A549 (cell line): ENCODE measurements at regions of chr3 and their contacts with region 1.

Region 1: GRCh38 chr3:142987080-142987700 is 14.2 kb upstream of the U2SURP start:
- DNase-seq: peak; percentile 50 to 54
- ATAC-seq: peak in 1 of 2 experiments; percentile 82; a peak in 3 of 6 replicates
- H3K4me3 ChIP-seq: no peak overlapping the region
- H3K27ac ChIP-seq: peak overlapping the region in 1 of 2 experiments; percentile 73; a peak in 3 of 6 replicates
- H3K4me1 ChIP-seq: no peaks in the 10 kb centered on the region
- CTCF ChIP-seq: peak; percentile 76
- EP300 ChIP-seq: no peak
- POLR2A ChIP-seq: no peak
- RAD21 ChIP-seq: peak; percentile 77 to 78

Region 2: GRCh38 chr3:142586803-142587406 is 400.3 kb before region 1 on chr3:
- CTCF ChIA-PET with region 1: interaction called, 16 read pairs
- POLR2A ChIA-PET with region 1: no interaction called
- DNase-seq: peak; percentile 84
- ATAC-seq: peak; percentile 95 to 96
- H3K4me3 ChIP-seq: no peak overlapping the region
- H3K27ac ChIP-seq: no peak overlapping the region
- H3K4me1 ChIP-seq: peaks cover 7% of the 10 kb centered on the region; the same call in 2 of the 3 replicates
- CTCF ChIP-seq: peak; percentile 94
- EP300 ChIP-seq: no peak
- POLR2A ChIP-seq: no peak
- RAD21 ChIP-seq: peak; percentile 95 to 97

Region 3: GRCh38 chr3:142896201-142896755 is 90.9 kb before region 1 on chr3:
- CTCF ChIA-PET with region 1: no interaction called
- POLR2A ChIA-PET with region 1: no interaction called
- DNase-seq: peak; percentile 40 to 53
- ATAC-seq: peak; percentile 74 to 80
- H3K4me3 ChIP-seq: no peak overlapping the region
- H3K27ac ChIP-seq: 0 out of 6 replicates have a peak overlapping the region, but pooled peaks of 1 of the 2 experiments have one; percentile 32
- H3K4me1 ChIP-seq: peaks cover 7% of the 10 kb centered on the region; the same call in 2 of the 3 replicates
- CTCF ChIP-seq: no peak
- EP300 ChIP-seq: no peak
- POLR2A ChIP-seq: no peak
- RAD21 ChIP-seq: no peak

Region 4: GRCh38 chr3:142929109-142929508 is 58.1 kb before region 1 on chr3:
- CTCF ChIA-PET with region 1: interaction called, 20 read pairs
- POLR2A ChIA-PET with region 1: no interaction called
- DNase-seq: peak; percentile 78 to 82
- ATAC-seq: peak; percentile 87 to 92
- H3K4me3 ChIP-seq: no peak overlapping the region
- H3K27ac ChIP-seq: no peak overlapping the region
- H3K4me1 ChIP-seq: no peaks in the 10 kb centered on the region; the same call in 2 of the 3 replicates
- CTCF ChIP-seq: peak; percentile 87
- EP300 ChIP-seq: no peak
- POLR2A ChIP-seq: no peak
- RAD21 ChIP-seq: peak; percentile 72 to 76

Region 5: DNA sequence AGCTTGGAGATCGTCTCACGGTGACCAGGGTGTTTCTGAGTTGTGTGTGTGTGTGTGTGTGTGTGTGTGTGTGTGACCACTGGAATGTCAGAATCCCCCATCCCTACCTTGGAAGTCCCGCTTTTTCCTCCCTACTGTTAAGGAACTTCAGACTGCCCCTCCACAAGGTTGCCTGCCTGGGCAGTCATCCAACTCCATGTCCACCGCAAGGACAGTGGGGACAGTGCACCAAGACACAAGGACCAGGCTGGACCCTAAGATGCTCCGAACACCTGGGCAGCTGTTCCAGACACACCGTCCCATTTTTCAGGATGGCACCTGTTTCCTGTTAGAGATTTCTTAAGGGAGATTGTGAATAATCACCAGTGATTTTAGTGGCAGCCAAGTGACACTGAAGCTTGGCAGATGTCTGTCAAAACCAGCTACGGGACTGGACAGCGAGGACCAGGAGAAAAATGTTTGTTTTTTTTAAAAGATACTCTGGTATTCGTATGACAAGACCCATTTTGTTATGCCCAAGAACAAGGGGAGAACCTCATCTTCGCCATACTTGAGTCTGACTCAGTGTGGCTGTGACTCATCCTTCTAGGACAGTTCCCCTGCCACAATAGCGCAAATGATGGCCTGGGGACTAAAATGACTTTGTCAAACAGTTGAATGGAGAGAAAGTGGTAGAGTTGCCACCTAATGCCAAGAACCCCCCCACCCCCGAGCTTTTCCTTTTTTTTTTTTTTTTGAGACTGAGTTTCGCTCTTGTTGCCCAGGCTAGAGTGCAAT is 39.2 kb before region 1 on chr3:
- CTCF ChIA-PET with region 1: interaction called, 10 read pairs
- POLR2A ChIA-PET with region 1: no interaction called
- DNase-seq: no peak
- ATAC-seq: no peak
- H3K4me3 ChIP-seq: no peak overlapping the region
- H3K27ac ChIP-seq: no peak overlapping the region
- H3K4me1 ChIP-seq: no peaks in the 10 kb centered on the region
- CTCF ChIP-seq: no peak
- EP300 ChIP-seq: no peak
- POLR2A ChIP-seq: no peak
- RAD21 ChIP-seq: no peak

Region 6: GRCh38 chr3:142976621-142977398 is 10.4 kb before region 1 on chr3:
- CTCF ChIA-PET with region 1: interaction called, 15 read pairs
- POLR2A ChIA-PET with region 1: no interaction called
- DNase-seq: peak; percentile 88 to 96
- ATAC-seq: peak; percentile 98 to 99
- H3K4me3 ChIP-seq: 0 out of 3 replicates have a peak overlapping the region, but pooled peaks have one; percentile 2
- H3K27ac ChIP-seq: peak overlapping the region; percentile 75 to 88
- H3K4me1 ChIP-seq: peaks cover 46% of the 10 kb centered on the region
- CTCF ChIP-seq: no peak
- EP300 ChIP-seq: 0 out of 5 replicates have a peak, but pooled peaks of 1 of the 2 experiments have one; percentile 32
- POLR2A ChIP-seq: no peak
- RAD21 ChIP-seq: no peak; a peak in 1 of 5 replicates

Region 7: DNA sequence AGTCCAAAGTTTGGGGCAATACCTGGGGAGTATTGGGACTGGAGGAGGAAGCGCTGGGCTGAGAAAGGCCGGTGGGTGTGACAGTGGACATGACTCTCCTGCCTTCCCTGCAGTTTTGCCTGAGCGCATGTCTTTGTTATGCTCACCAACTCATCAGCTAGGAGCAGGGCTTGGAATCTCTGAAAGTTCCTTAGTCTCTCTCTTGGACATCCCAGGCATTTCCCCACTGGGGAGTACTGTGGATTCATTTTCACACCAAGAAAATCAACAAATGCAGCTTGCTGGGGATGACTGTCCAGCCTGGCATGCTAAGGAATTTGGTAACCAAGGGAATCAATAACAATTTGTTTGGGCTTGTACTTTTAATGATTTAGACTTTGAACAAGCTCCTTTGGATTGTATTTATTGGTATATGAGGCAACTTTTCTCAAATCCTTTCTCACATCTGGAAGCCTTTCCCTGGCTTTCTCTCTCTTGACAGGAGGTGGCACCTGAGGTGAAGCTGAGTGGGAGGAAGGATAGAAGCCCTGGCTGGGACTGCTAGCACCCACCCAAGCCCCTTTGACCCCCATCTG is 83.9 kb after region 1 on chr3:
- CTCF ChIA-PET with region 1: no interaction called
- POLR2A ChIA-PET with region 1: no interaction called
- DNase-seq: peak in 1 of 2 experiments; percentile 48
- ATAC-seq: peak in 1 of 2 experiments; percentile 64; a peak in 4 of 6 replicates
- H3K4me3 ChIP-seq: no peak overlapping the region
- H3K27ac ChIP-seq: no peak overlapping the region
- H3K4me1 ChIP-seq: no peaks in the 10 kb centered on the region
- CTCF ChIP-seq: no peak
- EP300 ChIP-seq: no peak
- POLR2A ChIP-seq: no peak
- RAD21 ChIP-seq: no peak